ENCODE measurements at regions of chr1 and their contacts with region 1.

Region 1: DNA sequence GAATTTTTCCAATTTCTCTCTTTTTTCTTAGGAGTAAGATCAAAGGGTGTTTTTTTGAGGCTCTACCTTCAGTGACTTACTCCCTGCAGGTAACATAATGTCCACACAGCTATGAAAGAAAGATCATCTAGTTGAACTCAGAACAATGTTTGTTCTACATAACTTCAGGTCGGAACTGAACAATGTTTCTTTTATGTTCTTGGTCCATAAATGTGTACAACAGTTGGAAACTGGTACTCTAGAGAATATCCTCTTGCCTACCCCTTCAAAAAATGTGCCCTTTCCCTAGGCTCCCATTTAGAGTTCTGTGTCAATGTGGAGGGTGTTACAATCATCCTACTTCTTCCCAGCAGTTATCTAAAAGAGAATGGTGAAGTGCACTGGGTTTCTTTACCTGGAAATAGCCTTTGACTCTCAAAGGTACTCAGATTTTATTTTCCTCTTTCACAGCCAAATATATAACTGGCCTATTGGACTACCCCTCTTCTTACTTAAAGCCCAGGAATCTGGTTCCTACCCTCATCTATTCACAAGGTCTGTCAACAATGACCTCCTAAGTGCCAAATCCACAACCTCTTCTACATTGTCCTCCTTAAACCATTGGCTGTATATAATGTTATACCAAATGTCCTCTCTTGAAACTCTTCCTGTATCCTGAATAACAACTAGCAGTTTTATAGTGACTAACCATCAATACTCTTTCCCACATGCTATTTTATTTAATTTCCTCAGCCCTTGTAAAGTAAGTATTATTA is 42.3 kb downstream of the CD58 start:
- DNase-seq: no peak
- ATAC-seq: no peak
- H3K4me3 Mint-ChIP-seq: no peak overlapping the region
- H3K27ac Mint-ChIP-seq: no peak overlapping the region
- H3K4me1 Mint-ChIP-seq: no peaks in the 10 kb centered on the region
- H3K27me3 Mint-ChIP-seq: no peaks in the 10 kb centered on the region
- CTCF ChIP-seq: no peak

Region 2: DNA sequence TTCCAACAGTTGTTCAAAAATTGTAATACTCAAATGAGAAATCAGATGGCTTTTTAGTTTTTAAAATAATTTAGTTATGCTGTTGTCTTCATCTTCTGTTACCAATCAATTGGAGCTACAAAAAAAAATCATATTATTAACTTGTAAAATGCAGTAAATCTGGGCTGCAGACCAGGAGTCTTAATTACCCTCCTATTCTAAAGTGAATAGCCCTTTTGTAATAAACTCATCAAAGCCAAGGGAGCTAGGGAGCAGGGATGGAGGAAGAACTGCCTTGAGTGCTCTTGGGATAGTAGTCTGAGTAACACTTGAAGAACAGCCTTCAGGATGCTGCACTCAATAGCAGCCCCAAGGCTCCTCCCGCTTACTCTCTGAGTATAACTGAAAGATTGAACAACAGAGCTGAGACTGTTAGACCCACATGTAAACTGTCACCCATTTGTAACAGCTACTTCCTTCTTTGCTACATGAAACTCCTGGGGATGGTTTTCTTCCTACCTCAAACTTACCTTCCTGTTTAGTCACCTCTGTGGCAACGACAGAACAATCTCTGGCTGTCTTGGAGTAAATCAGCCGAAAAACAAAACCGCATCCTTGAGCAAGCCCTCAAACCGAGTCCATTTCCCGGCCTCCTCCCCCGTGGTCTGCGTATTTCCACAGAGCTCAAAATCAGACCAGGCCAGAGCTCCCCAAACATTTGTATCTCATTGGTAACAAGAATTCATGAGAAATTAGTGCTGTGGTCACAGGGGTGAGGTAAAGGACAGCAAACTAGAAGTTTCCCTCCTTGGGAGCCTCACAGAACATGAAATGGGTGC is 13.6 kb before region 1 on chr1:
- CTCF ChIA-PET with region 1: no interaction called
- POLR2A ChIA-PET with region 1: interaction called, 4 read pairs
- intact Hi-C with region 1: loop called (anchors 1 kb)
- DNase-seq: no peak
- ATAC-seq: peak; percentile 76
- H3K4me3 Mint-ChIP-seq: peak overlapping the region; percentile 56
- H3K27ac Mint-ChIP-seq: peak overlapping the region; percentile 92
- H3K4me1 Mint-ChIP-seq: peaks cover 59% of the 10 kb centered on the region
- H3K27me3 Mint-ChIP-seq: no peaks in the 10 kb centered on the region
- CTCF ChIP-seq: no peak

Region 3: GRCh38 chr1:116538544-116538943 is 10.0 kb after region 1 on chr1:
- CTCF ChIA-PET with region 1: no interaction called
- POLR2A ChIA-PET with region 1: no interaction called
- intact Hi-C with region 1: loop called (anchors 2 kb)
- DNase-seq: no peak
- ATAC-seq: peak; percentile 80
- H3K4me3 Mint-ChIP-seq: peak overlapping the region; percentile 20
- H3K27ac Mint-ChIP-seq: peak overlapping the region; percentile 86
- H3K4me1 Mint-ChIP-seq: peaks cover 66% of the 10 kb centered on the region
- H3K27me3 Mint-ChIP-seq: no peaks in the 10 kb centered on the region
- CTCF ChIP-seq: no peak

Region 4: DNA sequence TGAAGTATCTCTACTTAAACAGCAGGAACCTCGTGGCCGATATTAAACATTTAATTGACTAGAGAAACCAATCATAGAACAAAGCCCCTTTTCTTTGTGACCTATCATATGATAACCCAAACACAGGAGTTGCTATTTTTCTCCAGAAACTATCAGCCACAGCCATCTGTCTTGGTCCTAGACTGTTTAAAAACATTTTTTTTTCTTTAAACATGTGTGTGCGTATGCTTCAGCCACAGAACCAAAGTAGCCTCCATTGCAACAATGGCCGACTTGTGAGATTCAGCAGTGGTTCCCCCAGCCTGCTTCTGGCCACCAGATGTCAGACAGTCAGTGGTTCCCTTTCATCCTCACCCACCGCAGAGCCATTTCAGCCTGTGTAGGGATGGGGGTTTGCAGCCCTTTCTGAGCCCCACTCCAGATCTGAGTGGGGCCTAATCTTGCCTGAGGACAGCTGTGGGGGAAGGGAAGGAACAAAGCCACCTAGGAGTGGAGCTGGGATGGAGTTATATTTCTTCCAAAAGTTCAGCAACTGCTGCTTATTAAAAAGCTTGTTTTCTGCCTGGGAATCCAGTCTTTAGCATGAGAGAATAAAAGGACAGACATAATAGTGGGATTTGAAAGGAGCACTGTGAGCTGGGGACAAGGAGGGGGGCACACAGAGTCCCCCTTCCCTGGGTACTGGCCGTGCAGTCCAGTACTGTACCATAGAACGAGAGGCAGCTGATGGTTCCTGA is 150.8 kb after region 1 on chr1:
- CTCF ChIA-PET with region 1: no interaction called
- POLR2A ChIA-PET with region 1: no interaction called
- intact Hi-C with region 1: no loop called
- DNase-seq: no peak
- ATAC-seq: no peak
- H3K4me3 Mint-ChIP-seq: no peak overlapping the region
- H3K27ac Mint-ChIP-seq: no peak overlapping the region
- H3K4me1 Mint-ChIP-seq: no peaks in the 10 kb centered on the region
- H3K27me3 Mint-ChIP-seq: peaks cover 12% of the 10 kb centered on the region
- CTCF ChIP-seq: no peak

Measured in activated B cell treated with CpG ODN at 0.5 μM for 24 hours (primary cell).